Ascending aorta (tissue), 2 donors: ENCODE measurements at regions of chr6 and their contacts with region 1.

Region 1: GRCh38 chr6:2841264-2842138 is at the start of gene SERPINB1:
- DNase-seq: peak; percentile 75 to 97
- H3K4me3 ChIP-seq: peak within 1 kb of the TSS; percentile 74 to 87
- H3K27ac ChIP-seq: peak within 1 kb of the TSS; percentile 97 to 99
- H3K4me1 ChIP-seq: peaks cover 10 to 16% of the 10 kb centered on the region in 2 donors
- H3K27me3 ChIP-seq: no peaks in the 10 kb centered on the region
- CTCF ChIP-seq: peak in 1 of 3 experiments; percentile 20
- total RNA-seq, gene SERPINB1: 14.0 TPM

Region 2: DNA sequence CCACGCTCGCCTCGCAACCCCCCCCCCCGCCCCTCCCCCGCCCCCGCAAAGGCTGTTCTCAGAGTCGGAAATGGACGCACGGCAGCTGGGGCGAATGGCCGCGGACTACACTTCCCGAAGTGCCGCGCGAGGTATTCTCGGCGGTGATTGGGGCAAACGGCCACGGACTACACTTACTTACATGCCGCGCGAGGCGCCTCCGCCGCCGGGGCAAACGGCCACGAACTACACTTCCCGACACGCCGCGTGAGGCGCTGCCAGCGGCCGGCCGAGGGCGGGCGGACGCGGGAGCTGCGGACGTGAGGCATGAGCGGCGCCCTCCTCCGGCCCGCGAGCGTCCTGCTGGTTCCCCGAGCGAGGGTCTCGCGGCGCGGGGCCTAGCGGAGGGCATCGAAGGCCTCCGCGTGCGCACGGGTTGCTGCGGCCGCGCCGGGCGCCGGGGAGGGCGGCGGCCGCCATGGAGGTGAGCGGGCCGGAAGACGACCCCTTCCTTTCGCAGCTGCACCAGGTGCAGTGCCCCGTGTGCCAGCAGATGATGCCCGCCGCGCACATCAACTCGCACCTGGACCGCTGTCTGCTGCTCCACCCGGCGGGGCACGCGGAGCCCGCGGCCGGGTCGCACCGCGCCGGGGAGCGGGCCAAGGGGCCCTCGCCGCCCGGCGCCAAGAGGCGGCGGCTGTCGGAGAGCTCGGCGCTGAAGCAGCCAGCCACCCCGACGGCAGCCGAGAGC is 76.2 kb before region 1 on chr6 and contains the start of gene WRNIP1:
- intact Hi-C with region 1: loop called (anchors 1 kb)
- DNase-seq: peak; percentile 98 to 100
- H3K4me3 ChIP-seq: peak within 1 kb of the TSS; percentile 93
- H3K27ac ChIP-seq: peak within 1 kb of the TSS; percentile 92 to 99
- H3K4me1 ChIP-seq: peaks cover 6 to 17% of the 10 kb centered on the region in 2 donors
- H3K27me3 ChIP-seq: no peaks in the 10 kb centered on the region
- CTCF ChIP-seq: peak; percentile 47 to 93 (median 58)
- total RNA-seq, gene WRNIP1: 100 TPM

Region 3: DNA sequence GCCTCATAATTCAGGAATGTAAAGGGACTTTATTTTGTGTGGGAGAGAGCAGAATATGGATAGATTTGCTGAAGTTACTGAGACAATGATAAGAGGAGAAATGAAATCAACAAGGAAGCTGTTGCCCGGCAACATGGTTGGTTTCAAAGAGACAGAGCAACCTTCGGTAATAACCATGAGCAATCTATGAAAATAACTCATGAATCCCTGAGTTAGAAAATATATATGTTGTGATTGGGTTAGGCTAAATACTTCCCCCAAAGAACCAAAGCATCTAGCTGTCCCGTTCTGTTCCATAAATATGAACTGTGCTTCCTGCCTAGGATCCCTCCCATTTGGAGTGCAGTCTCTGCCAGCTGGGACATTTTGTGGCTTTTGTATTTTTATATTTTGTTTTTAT is 22.9 kb before region 1 on chr6:
- intact Hi-C with region 1: loop called (anchors 2 kb)
- DNase-seq: no peak
- H3K4me3 ChIP-seq: peak overlapping the region; percentile 4 to 11
- H3K27ac ChIP-seq: peak overlapping the region; percentile 72 to 80
- H3K4me1 ChIP-seq: peaks cover 0 to 31% of the 10 kb centered on the region in 2 donors
- H3K27me3 ChIP-seq: no peaks in the 10 kb centered on the region
- CTCF ChIP-seq: no peak